H1 (cell line): ENCODE measurements at regions of chr5 and their contacts with region 1.

Region 1: GRCh38 chr5:76175051-76175666 is 92.0 kb downstream of the SV2C start:
- DNase-seq: peak; percentile 66 to 71
- H3K4me3 ChIP-seq: no peak overlapping the region
- H3K27ac ChIP-seq: no peak overlapping the region
- H3K4me1 ChIP-seq: no peaks in the 10 kb centered on the region
- H3K27me3 ChIP-seq: no peaks in the 10 kb centered on the region
- CTCF ChIP-seq: peak; percentile 39 to 86 (median 86)
- EP300 ChIP-seq: no peak
- POLR2A ChIP-seq: no peak
- RAD21 ChIP-seq: peak; percentile 82 to 90

Region 2: GRCh38 chr5:75964008-75964407 is 211.2 kb before region 1 on chr5:
- CTCF ChIA-PET with region 1: no interaction called
- POLR2A ChIA-PET with region 1: no interaction called
- DNase-seq: no peak
- H3K4me3 ChIP-seq: no peak overlapping the region
- H3K27ac ChIP-seq: no peak overlapping the region
- H3K4me1 ChIP-seq: no peaks in the 10 kb centered on the region
- H3K27me3 ChIP-seq: no peaks in the 10 kb centered on the region
- CTCF ChIP-seq: no peak
- EP300 ChIP-seq: no peak
- POLR2A ChIP-seq: no peak
- RAD21 ChIP-seq: no peak

Region 3: GRCh38 chr5:76074487-76075065 is 100.6 kb before region 1 on chr5:
- CTCF ChIA-PET with region 1: interaction called, 39 read pairs
- POLR2A ChIA-PET with region 1: no interaction called
- DNase-seq: no peak
- H3K4me3 ChIP-seq: no peak overlapping the region
- H3K27ac ChIP-seq: no peak overlapping the region
- H3K4me1 ChIP-seq: no peaks in the 10 kb centered on the region
- H3K27me3 ChIP-seq: peaks cover 0 to 12% (median 3%) of the 10 kb centered on the region in 4 experiments; a peak in 5 of 7 replicates
- CTCF ChIP-seq: peak; percentile 42 to 88 (median 88)
- EP300 ChIP-seq: no peak
- POLR2A ChIP-seq: no peak
- RAD21 ChIP-seq: peak; percentile 93 to 95

Region 4: GRCh38 chr5:76082772-76083554 is 92.2 kb before region 1 on chr5 and contains the start of gene SV2C:
- CTCF ChIA-PET with region 1: interaction called, 18 read pairs
- POLR2A ChIA-PET with region 1: no interaction called
- DNase-seq: peak in 1 of 2 experiments; percentile 71
- H3K4me3 ChIP-seq: peak within 1 kb of the TSS; percentile 53 to 74 (median 58)
- H3K27ac ChIP-seq: no peak within 1 kb of the TSS
- H3K4me1 ChIP-seq: peaks cover 0 to 10% (median 6%) of the 10 kb centered on the region in 4 experiments; a peak in 6 of 7 replicates
- H3K27me3 ChIP-seq: peaks cover 30 to 76% (median 56%) of the 10 kb centered on the region in 4 experiments
- CTCF ChIP-seq: no peak
- EP300 ChIP-seq: no peak
- POLR2A ChIP-seq: no peak
- RAD21 ChIP-seq: no peak
- total RNA-seq, gene SV2C: 0.08 and 0.24 TPM in 2 replicates

Region 5: GRCh38 chr5:76104027-76104426 is 71.1 kb before region 1 on chr5:
- CTCF ChIA-PET with region 1: interaction called, 16 read pairs
- POLR2A ChIA-PET with region 1: no interaction called
- DNase-seq: peak in 1 of 2 experiments; percentile 79
- H3K4me3 ChIP-seq: no peak overlapping the region
- H3K27ac ChIP-seq: no peak overlapping the region
- H3K4me1 ChIP-seq: no peaks in the 10 kb centered on the region
- H3K27me3 ChIP-seq: no peaks in the 10 kb centered on the region
- CTCF ChIP-seq: no peak
- EP300 ChIP-seq: no peak
- POLR2A ChIP-seq: no peak
- RAD21 ChIP-seq: no peak

Region 6: DNA sequence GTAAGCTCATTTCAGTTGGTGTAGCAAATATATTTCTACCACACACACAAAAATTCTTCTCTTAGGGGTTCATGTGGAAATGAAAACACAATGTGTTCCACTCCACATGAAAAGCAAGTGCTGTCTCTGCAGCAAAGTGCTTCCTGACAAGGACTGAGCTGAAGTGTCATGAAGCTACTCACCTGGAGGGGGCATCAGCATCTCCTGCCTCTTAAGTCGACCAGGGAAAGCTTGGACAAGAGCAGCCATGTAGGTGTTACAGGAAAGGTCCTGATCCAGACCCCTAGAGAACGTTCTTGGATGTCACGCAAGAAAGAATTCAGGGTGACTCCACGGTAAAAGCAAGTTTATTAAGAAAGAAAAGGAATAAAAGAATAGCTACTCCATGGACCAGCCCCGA is 29.2 kb before region 1 on chr5:
- CTCF ChIA-PET with region 1: interaction called, 35 read pairs
- POLR2A ChIA-PET with region 1: no interaction called
- DNase-seq: peak in 1 of 2 experiments; percentile 13
- H3K4me3 ChIP-seq: no peak overlapping the region
- H3K27ac ChIP-seq: no peak overlapping the region
- H3K4me1 ChIP-seq: peaks cover 0 to 4% (median 2%) of the 10 kb centered on the region in 4 experiments; a peak in 2 of 7 replicates
- H3K27me3 ChIP-seq: peaks cover 0 to 2% (median 0%) of the 10 kb centered on the region in 4 experiments; a peak in 1 of 7 replicates
- CTCF ChIP-seq: peak; percentile 42 to 78 (median 65)
- EP300 ChIP-seq: no peak
- POLR2A ChIP-seq: no peak
- RAD21 ChIP-seq: peak; percentile 28 to 48

Region 7: DNA sequence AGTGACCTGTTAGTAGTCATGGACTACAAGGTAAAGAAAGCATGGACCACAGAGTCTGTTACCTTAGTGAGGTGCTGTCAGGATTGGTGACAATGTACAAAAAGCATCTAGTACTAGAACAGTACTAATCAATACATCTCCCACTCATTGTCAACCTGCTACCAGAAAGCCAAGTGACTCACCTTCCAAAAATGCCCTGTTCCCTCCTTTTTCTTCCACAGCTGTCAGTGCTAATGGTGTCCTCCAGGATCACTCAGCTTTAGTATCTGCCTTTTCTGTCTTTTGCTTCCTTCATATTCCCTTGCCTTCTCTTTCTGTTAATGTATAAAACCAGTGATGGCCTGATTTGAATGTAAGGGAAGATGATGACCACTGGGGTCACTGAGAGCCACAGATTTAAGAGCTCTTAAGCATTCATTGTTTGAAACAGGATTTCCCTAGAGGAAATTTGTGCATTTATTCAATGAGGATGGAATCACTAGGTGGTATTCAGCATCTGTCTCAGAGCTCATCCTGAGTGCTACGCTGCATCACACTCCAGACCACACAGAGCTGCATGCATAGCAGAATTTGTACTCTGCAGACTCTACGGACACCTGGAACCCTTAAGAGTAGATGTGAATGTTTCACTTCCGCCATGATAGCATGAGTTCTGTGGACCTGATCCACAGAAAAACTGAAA is 21.0 kb before region 1 on chr5:
- CTCF ChIA-PET with region 1: interaction called, 35 read pairs
- POLR2A ChIA-PET with region 1: no interaction called
- DNase-seq: no peak
- H3K4me3 ChIP-seq: no peak overlapping the region
- H3K27ac ChIP-seq: no peak overlapping the region
- H3K4me1 ChIP-seq: no peaks in the 10 kb centered on the region
- H3K27me3 ChIP-seq: no peaks in the 10 kb centered on the region; a peak in 1 of 7 replicates
- CTCF ChIP-seq: no peak
- EP300 ChIP-seq: no peak
- POLR2A ChIP-seq: no peak
- RAD21 ChIP-seq: no peak

Region 8: GRCh38 chr5:76191826-76192490 is 16.8 kb after region 1 on chr5:
- CTCF ChIA-PET with region 1: interaction called, 15 read pairs
- POLR2A ChIA-PET with region 1: interaction called, 3 read pairs
- DNase-seq: no peak
- H3K4me3 ChIP-seq: no peak overlapping the region
- H3K27ac ChIP-seq: no peak overlapping the region
- H3K4me1 ChIP-seq: peaks cover 0 to 16% (median 6%) of the 10 kb centered on the region in 4 experiments; a peak in 3 of 7 replicates
- H3K27me3 ChIP-seq: no peaks in the 10 kb centered on the region
- CTCF ChIP-seq: no peak
- EP300 ChIP-seq: no peak
- POLR2A ChIP-seq: no peak
- RAD21 ChIP-seq: no peak

Region 9: DNA sequence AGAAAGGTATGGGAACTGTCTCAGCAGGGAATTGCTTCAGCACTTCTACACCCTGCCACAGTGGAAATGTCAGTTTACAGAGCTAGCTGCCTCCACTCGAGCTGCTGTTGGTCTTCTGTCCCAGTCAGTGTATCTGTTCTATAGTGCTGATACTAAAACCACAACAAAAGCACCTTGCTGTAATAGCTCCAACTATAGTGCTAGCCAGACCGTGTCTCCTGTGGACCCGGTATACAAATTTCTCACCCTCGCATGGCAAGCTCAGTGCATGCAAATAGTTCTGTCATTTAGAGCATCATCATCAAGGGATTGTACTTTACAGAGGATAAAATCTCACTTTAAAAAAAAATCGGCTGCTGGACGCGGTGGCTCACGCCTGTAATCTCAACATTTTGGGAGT is 176.4 kb after region 1 on chr5:
- CTCF ChIA-PET with region 1: no interaction called
- POLR2A ChIA-PET with region 1: no interaction called
- DNase-seq: no peak
- H3K4me3 ChIP-seq: no peak overlapping the region
- H3K27ac ChIP-seq: no peak overlapping the region
- H3K4me1 ChIP-seq: no peaks in the 10 kb centered on the region
- H3K27me3 ChIP-seq: no peaks in the 10 kb centered on the region
- CTCF ChIP-seq: no peak
- EP300 ChIP-seq: no peak
- POLR2A ChIP-seq: no peak
- RAD21 ChIP-seq: no peak